Left lung (tissue), 14 donors: ENCODE measurements at regions of chr6 and their contacts with region 1.

Region 1: GRCh38 chr6:70884074-70884983 is 72.5 kb downstream of the B3GAT2 start:
- DNase-seq: peak; percentile 22 to 81 (median 50)
- ATAC-seq: peak; percentile 96
- H3K4me3 ChIP-seq: no peak overlapping the region
- H3K27ac ChIP-seq: no peak overlapping the region
- H3K4me1 ChIP-seq: no peaks in the 10 kb centered on the region
- H3K27me3 ChIP-seq: no peaks in the 10 kb centered on the region
- CTCF ChIP-seq: peak; percentile 85 to 87

Region 2: GRCh38 chr6:70706491-70707123 is 177.7 kb before region 1 on chr6:
- intact Hi-C with region 1: loop called (anchors 2 to 10 kb)
- DNase-seq: peak in 2 of 4 donors; percentile 54
- ATAC-seq: peak; percentile 49
- H3K4me3 ChIP-seq: no peak overlapping the region
- H3K27ac ChIP-seq: no peak overlapping the region
- H3K4me1 ChIP-seq: peaks cover 0 to 5% of the 10 kb centered on the region in 2 donors
- H3K27me3 ChIP-seq: no peaks in the 10 kb centered on the region
- CTCF ChIP-seq: peak; percentile 25 to 72

Region 3: DNA sequence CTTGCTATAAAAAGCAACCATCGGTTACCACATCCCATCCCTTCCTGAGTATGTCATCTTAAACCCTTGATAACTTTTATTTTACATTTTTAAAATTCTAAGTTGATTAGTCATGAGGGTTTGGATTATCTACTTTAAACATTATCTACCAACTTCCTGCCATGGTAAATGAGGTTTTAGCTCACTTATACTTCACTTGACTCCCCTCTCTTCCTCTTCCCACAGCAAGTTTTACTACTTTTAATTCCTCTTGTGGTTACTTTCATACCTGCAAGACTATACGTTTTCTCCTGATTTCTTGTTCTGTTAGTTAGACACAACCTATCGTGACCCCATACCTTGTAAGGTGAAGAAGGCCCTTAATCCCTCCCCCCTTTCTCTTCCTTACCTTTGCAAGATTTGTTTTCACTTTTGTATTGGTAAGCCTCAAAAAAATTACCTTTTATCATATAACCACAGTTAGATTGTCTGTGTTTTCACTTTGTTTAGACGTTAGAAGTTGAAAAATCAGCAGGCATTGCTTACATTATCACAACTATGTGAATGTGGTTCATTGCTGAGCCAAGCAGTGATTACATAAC is 344.2 kb after region 1 on chr6:
- intact Hi-C with region 1: no loop called
- DNase-seq: no peak
- ATAC-seq: peak; percentile 12
- H3K4me3 ChIP-seq: no peak overlapping the region
- H3K27ac ChIP-seq: no peak overlapping the region
- H3K4me1 ChIP-seq: no peaks in the 10 kb centered on the region
- H3K27me3 ChIP-seq: no peaks in the 10 kb centered on the region
- CTCF ChIP-seq: no peak